WTC11 (cell line): ENCODE measurements at regions of chr12 and their contacts with region 1.

Region 1: DNA sequence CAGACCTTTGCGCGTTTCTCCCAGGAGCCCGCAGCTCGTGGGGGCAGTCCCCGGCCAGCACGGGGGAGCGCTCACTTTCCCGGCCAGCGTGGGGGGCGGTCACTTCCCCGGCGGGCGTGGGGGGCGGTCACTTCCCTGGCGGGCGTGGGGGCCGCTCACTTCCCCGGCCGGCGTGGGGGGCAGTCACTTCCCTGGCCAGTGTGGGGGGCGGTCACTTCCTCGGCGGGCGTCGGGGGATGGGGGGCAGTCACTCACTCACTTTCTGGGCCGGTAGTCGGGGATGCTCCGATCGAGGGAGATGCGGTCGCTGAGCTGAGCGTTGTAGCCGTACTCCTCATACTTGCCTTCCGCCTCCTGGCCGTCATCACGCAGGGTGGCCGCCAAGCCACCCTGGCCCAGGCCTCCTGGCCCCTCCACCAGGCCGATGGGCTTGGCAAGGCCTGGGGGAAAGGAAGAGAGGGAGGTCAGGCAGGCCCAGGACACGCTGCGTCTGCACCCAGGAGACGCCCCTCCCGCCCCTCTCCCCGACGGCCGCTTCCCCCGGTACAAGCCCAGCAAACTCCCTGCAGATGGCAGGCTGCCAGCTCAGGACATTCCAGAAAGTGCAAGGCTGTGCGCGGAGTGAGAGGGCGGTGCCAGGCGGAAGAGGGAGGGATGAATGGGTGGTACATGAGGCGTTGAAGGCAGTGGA is 43.3 kb downstream of the GALNT9 start:
- DNase-seq: no peak
- ATAC-seq: peak; percentile 64
- H3K4me3 Mint-ChIP-seq: peak overlapping the region; percentile 62
- H3K27ac Mint-ChIP-seq: no peak overlapping the region
- H3K4me1 Mint-ChIP-seq: peaks cover 21% of the 10 kb centered on the region
- H3K27me3 Mint-ChIP-seq: peaks cover 45% of the 10 kb centered on the region
- CTCF ChIP-seq: no peak

Region 2: GRCh38 chr12:132117558-132117875 is 168.6 kb before region 1 on chr12:
- CTCF ChIA-PET with region 1: no interaction called
- POLR2A ChIA-PET with region 1: no interaction called
- DNase-seq: peak; percentile 43
- ATAC-seq: peak; percentile 94
- H3K4me3 Mint-ChIP-seq: no peak overlapping the region
- H3K27ac Mint-ChIP-seq: no peak overlapping the region
- H3K4me1 Mint-ChIP-seq: no peaks in the 10 kb centered on the region
- H3K27me3 Mint-ChIP-seq: no peaks in the 10 kb centered on the region
- CTCF ChIP-seq: no peak

Region 3: GRCh38 chr12:132275110-132275531 is 11.0 kb before region 1 on chr12:
- CTCF ChIA-PET with region 1: interaction called, 51 read pairs
- POLR2A ChIA-PET with region 1: interaction called, 3 read pairs
- DNase-seq: peak; percentile 66
- ATAC-seq: peak; percentile 91
- H3K4me3 Mint-ChIP-seq: peak overlapping the region; percentile 32; the same call in 1 of the 2 replicates
- H3K27ac Mint-ChIP-seq: peak overlapping the region; percentile 81; the same call in 1 of the 2 replicates
- H3K4me1 Mint-ChIP-seq: peaks cover 26% of the 10 kb centered on the region
- H3K27me3 Mint-ChIP-seq: peaks cover 12% of the 10 kb centered on the region
- CTCF ChIP-seq: no peak

Region 4: GRCh38 chr12:132327351-132328171 is 41.4 kb after region 1 on chr12:
- CTCF ChIA-PET with region 1: interaction called, 10 read pairs
- POLR2A ChIA-PET with region 1: no interaction called
- DNase-seq: no peak
- ATAC-seq: no peak
- H3K4me3 Mint-ChIP-seq: no peak overlapping the region
- H3K27ac Mint-ChIP-seq: no peak overlapping the region
- H3K4me1 Mint-ChIP-seq: no peaks in the 10 kb centered on the region
- H3K27me3 Mint-ChIP-seq: peaks cover 79% of the 10 kb centered on the region
- CTCF ChIP-seq: no peak

Region 5: GRCh38 chr12:132373901-132374611 is 87.9 kb after region 1 on chr12:
- CTCF ChIA-PET with region 1: interaction called, 10 read pairs
- POLR2A ChIA-PET with region 1: no interaction called
- DNase-seq: no peak
- ATAC-seq: peak; percentile 65
- H3K4me3 Mint-ChIP-seq: no peak overlapping the region
- H3K27ac Mint-ChIP-seq: no peak overlapping the region
- H3K4me1 Mint-ChIP-seq: peaks cover 14% of the 10 kb centered on the region
- H3K27me3 Mint-ChIP-seq: peaks cover 85% of the 10 kb centered on the region
- CTCF ChIP-seq: no peak

Region 6: GRCh38 chr12:132513070-132513398 is 226.9 kb after region 1 on chr12:
- CTCF ChIA-PET with region 1: no interaction called
- POLR2A ChIA-PET with region 1: no interaction called
- DNase-seq: no peak
- ATAC-seq: no peak
- H3K4me3 Mint-ChIP-seq: no peak overlapping the region
- H3K27ac Mint-ChIP-seq: no peak overlapping the region
- H3K4me1 Mint-ChIP-seq: no peaks in the 10 kb centered on the region
- H3K27me3 Mint-ChIP-seq: peaks cover 14% of the 10 kb centered on the region
- CTCF ChIP-seq: no peak